ENCODE measurements at regions of chr1 and their contacts with region 1.

Region 1: DNA sequence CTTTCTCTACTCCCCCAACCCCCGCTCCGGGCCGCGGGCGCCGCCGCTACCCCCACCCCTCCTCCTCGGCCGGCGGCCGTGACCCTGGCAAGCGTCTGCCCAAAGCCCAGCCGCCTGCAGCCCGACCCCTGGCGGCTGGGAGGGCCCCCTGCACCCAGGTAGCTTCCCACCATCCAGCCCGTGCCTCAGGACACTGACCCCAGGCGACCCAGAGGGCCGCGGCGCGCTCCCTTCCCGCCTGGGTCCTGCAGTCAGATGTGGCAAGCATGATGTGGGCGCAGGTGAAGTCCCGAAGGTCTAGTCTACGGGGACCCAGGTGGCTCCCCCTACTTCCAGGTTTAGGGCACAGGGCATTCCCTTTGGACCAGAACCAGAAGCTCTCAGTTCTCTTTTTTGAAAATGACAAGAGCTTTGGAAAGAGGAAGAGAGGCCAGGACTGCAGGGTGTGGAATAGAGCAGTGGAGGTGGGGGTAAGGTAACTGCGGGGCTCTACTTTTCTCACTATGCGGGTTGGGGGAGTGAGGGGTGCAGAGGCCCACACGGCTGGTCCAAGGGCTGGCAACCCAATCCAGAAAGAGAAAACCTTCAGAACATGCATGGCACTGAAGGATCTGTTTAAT is at the start of gene DENND4B:
- DNase-seq: peak; percentile 67 to 87 (median 80)
- H3K4me3 ChIP-seq: peak within 1 kb of the TSS; percentile 71 to 98 (median 84)
- H3K27ac ChIP-seq: peak within 1 kb of the TSS; percentile 83 to 99 (median 95)
- H3K27me3 ChIP-seq: no peaks in the 10 kb centered on the region
- CTCF ChIP-seq: peak; percentile 71 to 97 (median 90)
- total RNA-seq, gene DENND4B: 81.7 to 180 (median 112) TPM

Region 2: GRCh38 chr1:153649863-153650235 is 296.9 kb before region 1 on chr1:
- intact Hi-C with region 1: no loop called
- DNase-seq: peak; percentile 66 to 89 (median 83)
- H3K4me3 ChIP-seq: peak overlapping the region in 16 of 59 donors; percentile 1 to 37 (median 12)
- H3K27ac ChIP-seq: peak overlapping the region; percentile 66 to 98 (median 91)
- H3K27me3 ChIP-seq: no peaks in the 10 kb centered on the region
- CTCF ChIP-seq: no peak

Region 3: DNA sequence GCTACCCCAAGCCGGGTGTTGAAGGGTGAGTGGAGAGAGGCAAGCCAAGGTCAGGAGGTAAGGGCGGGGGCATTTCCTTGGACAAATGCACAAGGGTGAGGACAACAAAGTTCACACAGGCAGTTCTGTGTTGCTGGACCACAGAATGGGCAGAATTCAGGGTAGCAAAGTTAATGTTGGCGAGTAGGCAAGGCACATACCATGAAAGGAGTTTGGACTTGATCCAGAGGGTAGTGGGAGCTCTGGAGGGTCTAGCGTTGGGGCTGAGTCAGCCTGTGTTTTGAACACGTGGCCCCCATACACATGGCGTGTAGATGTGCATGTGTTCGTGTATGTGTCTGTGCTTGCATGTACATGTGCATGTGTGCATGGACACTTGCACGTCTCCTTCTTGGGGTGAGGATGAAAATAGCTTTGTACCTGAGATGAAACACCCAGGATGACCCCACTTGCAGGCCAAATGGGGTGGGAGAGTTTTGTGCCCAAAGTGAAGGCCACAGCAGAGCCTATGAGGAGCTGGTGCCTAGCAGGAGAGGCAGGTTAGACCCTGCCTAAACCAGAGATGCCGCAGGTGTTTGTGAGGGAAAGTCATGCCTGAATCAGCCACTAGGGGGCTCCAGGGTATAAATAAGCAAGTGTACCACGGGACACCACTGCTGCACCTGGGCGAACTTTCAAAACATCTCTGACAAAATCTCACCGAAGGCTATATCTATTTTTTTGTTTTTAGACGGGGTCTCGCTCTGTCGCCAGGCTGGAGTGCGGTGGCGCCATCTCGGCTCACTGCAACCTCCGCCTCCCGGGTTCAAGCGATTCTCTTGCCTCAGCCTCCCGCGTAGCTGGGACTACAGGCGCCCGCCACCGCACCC is 149.7 kb before region 1 on chr1:
- intact Hi-C with region 1: loop called in 1 of 2 experiments (anchors 10 kb)
- DNase-seq: peak in 8 of 10 donors; percentile 53 to 91 (median 72)
- H3K4me3 ChIP-seq: peak overlapping the region in 3 of 59 donors; percentile 7 to 22 (median 15)
- H3K27ac ChIP-seq: no peak overlapping the region
- H3K27me3 ChIP-seq: no peaks in the 10 kb centered on the region
- CTCF ChIP-seq: peak; percentile 68 to 94 (median 90)

Region 4: DNA sequence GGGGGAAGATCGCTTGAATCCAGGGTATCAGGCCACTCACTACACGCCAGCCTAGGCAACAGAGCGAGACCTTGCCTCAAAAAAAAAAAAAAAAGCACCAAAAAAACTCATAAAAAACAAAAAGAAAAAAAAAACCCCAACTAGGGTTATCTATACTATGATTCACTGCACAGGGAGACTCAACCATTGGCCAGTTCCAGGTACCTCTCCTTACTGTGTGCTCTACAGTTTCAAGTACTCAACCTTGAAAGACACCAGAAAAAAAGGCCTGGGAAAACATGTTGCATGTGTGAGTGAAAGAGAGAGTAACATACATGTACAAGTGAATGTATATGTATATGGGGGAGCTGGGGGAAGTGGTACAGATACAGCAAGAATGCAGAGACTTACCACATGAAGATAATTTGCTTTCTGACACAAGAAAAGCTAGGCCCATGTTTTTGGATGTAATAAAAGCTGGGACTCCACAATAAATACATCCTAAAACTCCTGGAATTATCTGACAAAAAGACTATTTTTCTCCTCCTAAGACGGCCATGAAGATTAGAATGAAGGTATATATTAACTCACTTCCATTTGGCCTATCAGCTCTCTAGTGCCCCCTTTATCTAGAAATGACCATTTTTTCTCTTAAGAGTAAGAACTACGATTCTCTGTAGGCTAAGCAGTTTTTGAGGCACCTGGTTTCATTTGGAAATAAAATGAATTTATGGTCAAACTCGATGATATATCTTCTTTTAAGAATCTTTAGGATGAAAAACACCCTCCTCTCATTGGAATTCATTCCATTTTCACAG is 119.4 kb before region 1 on chr1:
- intact Hi-C with region 1: loop called in 1 of 2 experiments (anchors 5 kb)
- DNase-seq: no peak
- H3K4me3 ChIP-seq: no peak overlapping the region
- H3K27ac ChIP-seq: no peak overlapping the region
- H3K27me3 ChIP-seq: no peaks in the 10 kb centered on the region
- CTCF ChIP-seq: peak in 4 of 56 donors; percentile 3 to 26 (median 14)

Region 5: DNA sequence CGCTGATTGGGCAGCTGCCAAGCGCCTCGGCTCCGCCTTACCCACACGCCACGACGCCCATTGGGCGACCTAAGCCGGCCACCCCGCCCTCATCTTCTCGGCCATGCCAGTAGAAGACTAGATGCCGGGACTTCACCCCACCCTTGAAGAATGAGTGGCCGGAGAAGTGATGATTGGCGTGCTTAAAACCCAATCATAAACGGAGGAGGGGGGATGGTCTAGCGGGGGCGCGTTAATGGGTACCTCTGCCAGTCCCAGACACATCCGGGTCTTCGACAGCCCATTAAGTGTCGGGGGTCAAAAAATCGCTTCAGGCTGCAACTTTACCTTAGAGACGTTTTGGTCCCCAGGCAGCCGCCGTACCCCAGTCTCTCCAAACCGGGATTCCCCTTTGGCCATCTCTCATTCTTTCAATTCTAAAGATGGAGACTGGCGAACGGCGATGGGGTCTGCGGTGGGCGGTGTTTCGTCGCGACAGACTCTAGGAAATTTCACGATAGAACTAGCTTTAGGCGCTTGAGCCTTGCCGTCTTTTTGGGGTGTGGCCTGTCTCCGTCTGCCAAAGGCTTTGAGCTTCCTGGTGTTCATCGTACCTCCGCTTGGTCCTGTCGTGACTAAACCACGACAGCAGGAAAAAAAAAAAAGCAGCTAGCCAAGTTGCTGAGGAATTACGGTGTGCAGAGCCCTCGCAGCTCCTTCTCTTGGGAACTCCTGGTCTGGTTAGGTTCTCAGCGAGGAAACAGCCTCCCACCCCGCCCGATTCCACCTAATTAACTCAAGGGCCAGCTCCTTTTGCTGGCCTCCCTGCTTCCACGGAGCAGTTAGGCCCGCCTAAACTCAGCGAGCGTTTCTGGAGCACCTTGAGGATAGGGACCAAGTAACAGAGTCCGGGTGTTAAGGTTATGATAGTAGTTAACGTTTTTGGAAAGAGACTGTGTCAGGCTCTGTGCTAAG is 23.5 kb before region 1 on chr1 and contains the start of gene GATAD2B:
- intact Hi-C with region 1: loop called in 1 of 2 experiments (anchors 1 kb)
- DNase-seq: peak; percentile 98 to 100 (median 99)
- H3K4me3 ChIP-seq: peak within 1 kb of the TSS; percentile 55 to 95 (median 82)
- H3K27ac ChIP-seq: peak within 1 kb of the TSS; percentile 76 to 98 (median 95)
- H3K27me3 ChIP-seq: no peaks in the 10 kb centered on the region
- CTCF ChIP-seq: peak in 19 of 56 donors; percentile 4 to 50 (median 26)
- total RNA-seq, gene GATAD2B: 55.8 to 101 (median 81.7) TPM

Region 6: DNA sequence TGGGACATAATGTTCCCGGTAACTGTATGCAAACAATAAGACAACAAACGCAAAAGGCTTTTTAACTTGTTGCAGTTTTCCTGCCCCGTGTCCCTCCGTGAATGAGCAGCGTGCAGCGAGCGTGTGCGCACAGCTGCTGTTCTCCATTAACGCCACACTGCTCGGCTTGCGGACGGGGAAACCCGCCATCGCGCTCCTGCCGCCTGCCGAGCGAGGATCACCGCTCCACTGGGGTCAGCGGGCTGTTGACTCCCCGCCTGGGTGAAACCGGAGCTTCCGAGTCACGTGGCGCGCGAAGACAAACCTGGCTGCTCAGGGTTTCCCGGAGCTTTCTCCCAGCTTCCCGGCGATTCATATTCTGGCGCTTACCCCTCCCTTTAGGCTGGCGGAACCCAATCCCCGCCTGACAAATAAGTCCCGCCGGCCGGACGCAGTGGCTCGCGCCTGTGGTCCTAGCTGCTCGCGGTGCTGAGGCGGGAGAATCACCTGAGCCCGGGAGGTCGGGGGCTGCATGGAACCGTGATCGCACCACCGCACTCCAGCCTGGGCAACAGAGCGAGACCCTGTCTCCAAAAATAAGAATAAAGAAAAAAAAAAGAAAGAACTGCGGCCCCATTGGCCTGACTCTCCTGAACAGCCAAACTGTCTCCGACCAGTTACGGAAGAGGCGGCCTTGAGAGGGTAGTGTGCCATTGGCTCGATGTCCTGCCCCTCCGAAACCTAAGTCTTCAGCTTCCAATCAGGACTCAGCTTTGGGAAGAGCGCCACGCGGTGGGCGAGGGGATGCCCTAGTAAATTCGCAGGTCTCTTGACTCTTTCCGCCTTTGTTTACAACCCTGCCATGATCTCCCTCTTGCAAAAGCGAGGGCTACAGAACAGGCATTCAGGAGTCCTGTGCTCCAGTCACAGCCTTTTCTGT is 20.6 kb after region 1 on chr1 and contains the start of gene CREB3L4:
- intact Hi-C with region 1: loop called in 1 of 2 experiments (anchors 1 kb)
- DNase-seq: peak; percentile 82 to 96 (median 93)
- H3K4me3 ChIP-seq: peak within 1 kb of the TSS; percentile 57 to 87 (median 74)
- H3K27ac ChIP-seq: peak within 1 kb of the TSS; percentile 42 to 98 (median 93)
- H3K27me3 ChIP-seq: no peaks in the 10 kb centered on the region
- CTCF ChIP-seq: peak; percentile 30 to 77 (median 66)
- total RNA-seq, gene CREB3L4: 1.5 to 11.6 (median 4.5) TPM

Measured in dorsolateral prefrontal cortex (tissue), 120 donors.